ENCODE measurements at regions of chr9 and their contacts with region 1.

Region 1: DNA sequence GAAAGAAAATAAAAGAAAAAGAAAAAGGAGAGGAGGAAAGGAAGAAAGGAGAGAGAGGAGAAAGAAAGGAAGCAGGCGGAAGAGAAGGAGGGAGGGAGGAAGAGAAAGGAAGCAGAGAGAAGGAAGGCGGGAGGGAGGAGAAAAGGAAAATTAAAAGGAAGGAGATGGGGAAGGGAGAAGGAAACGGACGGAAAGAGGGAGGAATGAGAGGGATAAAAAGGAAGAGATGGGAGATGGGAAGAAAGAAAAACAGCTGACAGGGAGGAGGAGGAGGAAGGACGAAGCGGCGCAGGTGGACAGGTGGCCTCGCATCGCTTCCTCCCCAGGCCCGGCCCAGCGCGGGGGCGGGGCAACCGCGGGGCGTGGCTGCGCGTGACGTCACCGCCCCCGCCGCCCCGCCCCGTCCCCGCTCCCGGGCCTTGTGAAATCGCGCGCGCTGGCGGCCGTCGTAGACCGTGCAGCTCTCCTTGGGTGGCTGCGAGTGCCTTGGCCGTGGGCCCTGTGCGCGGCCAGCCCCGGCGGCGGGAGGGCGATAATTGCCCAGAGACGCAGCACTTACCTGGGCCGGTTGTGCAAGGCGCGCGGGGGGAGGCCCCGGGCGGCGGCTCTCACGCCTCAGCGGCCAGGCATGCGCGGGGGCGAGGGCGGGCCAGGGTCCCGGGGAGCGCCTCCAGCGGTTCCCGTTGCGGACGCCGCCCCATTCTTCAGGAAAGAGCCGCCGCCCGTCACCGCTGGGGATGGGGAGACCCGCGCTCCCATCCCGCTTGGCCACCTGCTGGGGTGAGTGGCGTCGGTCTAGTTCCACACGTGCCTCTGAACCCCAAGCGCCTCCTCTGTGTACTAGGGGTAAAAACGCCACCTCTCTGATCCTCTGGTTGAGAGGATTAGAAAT is 49.6 kb upstream of the FOXE1 start:
- DNase-seq: peak; percentile 60 to 90 (median 72)
- ATAC-seq: peak; percentile 93
- H3K4me3 ChIP-seq: peak overlapping the region; percentile 45
- H3K4me3 Mint-ChIP-seq: peak overlapping the region; percentile 84
- H3K27ac ChIP-seq: no peak overlapping the region
- H3K27ac Mint-ChIP-seq: peak overlapping the region; percentile 69
- H3K4me1 ChIP-seq: peaks cover 14% of the 10 kb centered on the region
- H3K4me1 Mint-ChIP-seq: peaks cover 5% of the 10 kb centered on the region
- H3K27me3 ChIP-seq: peaks cover 4 to 9% of the 10 kb centered on the region in 2 experiments
- H3K27me3 Mint-ChIP-seq: peaks cover 32% of the 10 kb centered on the region
- CTCF ChIP-seq: no peak

Region 2: DNA sequence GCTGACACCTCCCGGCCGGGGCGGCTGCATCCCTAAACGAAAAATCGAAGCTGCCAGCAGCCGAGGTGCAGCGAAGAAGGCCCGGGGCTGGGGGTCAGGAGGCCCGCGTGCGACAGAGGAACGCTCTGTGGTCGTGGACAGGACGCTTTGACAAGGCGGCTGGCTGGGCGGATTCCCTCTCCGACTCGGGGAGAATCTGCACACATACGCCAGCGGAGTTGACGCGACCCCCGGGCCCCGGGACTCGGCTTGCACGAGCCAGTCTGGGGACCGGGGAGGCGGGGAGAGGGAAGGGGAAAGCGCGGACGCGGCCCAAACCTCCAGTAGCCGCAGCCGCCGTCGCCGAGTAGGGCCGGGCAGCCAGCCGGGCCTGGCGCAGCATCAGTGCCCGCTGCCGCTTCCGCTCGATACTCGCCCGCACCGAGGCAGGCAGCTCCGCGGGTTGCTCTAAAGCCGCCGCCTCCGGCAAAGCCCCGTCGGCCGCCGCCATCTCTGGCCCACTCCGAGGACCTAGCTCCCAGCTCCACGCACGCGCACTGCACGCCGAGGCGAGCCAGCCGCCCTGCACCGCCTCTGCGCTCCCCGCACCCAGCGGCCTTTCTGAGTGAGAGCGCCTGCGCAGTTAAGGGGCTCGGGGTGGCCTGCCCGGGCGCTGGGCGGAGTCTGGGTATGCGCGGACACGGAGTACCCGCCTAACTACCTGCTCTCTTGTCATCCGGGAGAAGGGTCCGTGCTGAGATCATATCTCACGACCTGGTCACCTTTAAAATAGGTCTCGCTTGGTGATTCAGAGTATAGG is 106.4 kb before region 1 on chr9 and contains the start of gene XPA:
- CTCF ChIA-PET with region 1: no interaction called
- POLR2A ChIA-PET with region 1: no interaction called
- intact Hi-C with region 1: loop called (anchors 5 to 10 kb)
- DNase-seq: peak; percentile 94 to 99 (median 97)
- ATAC-seq: peak; percentile 92
- H3K4me3 ChIP-seq: peak within 1 kb of the TSS; percentile 83
- H3K4me3 Mint-ChIP-seq: peak within 1 kb of the TSS; percentile 87
- H3K27ac ChIP-seq: peak within 1 kb of the TSS; percentile 80 to 81
- H3K27ac Mint-ChIP-seq: peak within 1 kb of the TSS; percentile 86
- H3K4me1 ChIP-seq: peaks cover 26% of the 10 kb centered on the region
- H3K4me1 Mint-ChIP-seq: peaks cover 62% of the 10 kb centered on the region
- H3K27me3 ChIP-seq: no peaks in the 10 kb centered on the region
- H3K27me3 Mint-ChIP-seq: peaks cover 4% of the 10 kb centered on the region
- CTCF ChIP-seq: no peak
- total RNA-seq, gene XPA: 20.2 to 23.3 TPM

Region 3: GRCh38 chr9:97710356-97711222 is 92.8 kb before region 1 on chr9:
- CTCF ChIA-PET with region 1: no interaction called
- POLR2A ChIA-PET with region 1: no interaction called
- intact Hi-C with region 1: loop called (anchors 5 to 10 kb)
- DNase-seq: peak in 10 of 14 experiments; percentile 14 to 81 (median 29)
- ATAC-seq: peak; percentile 82
- H3K4me3 ChIP-seq: no peak overlapping the region
- H3K4me3 Mint-ChIP-seq: no peak overlapping the region
- H3K27ac ChIP-seq: no peak overlapping the region
- H3K27ac Mint-ChIP-seq: no peak overlapping the region
- H3K4me1 ChIP-seq: peaks cover 25% of the 10 kb centered on the region
- H3K4me1 Mint-ChIP-seq: peaks cover 39% of the 10 kb centered on the region
- H3K27me3 ChIP-seq: peaks cover 0 to 5% of the 10 kb centered on the region in 2 experiments
- H3K27me3 Mint-ChIP-seq: peaks cover 15% of the 10 kb centered on the region
- CTCF ChIP-seq: peak; percentile 89

Region 4: GRCh38 chr9:98034593-98035546 is 231.5 kb after region 1 on chr9:
- CTCF ChIA-PET with region 1: no interaction called
- POLR2A ChIA-PET with region 1: no interaction called
- intact Hi-C with region 1: loop called in 1 of 2 experiments (anchors 10 kb)
- DNase-seq: peak; percentile 82 to 97 (median 92)
- ATAC-seq: peak; percentile 99
- H3K4me3 ChIP-seq: no peak overlapping the region
- H3K4me3 Mint-ChIP-seq: no peak overlapping the region
- H3K27ac ChIP-seq: no peak overlapping the region
- H3K27ac Mint-ChIP-seq: no peak overlapping the region
- H3K4me1 ChIP-seq: peaks cover 6% of the 10 kb centered on the region
- H3K4me1 Mint-ChIP-seq: peaks cover 5% of the 10 kb centered on the region
- H3K27me3 ChIP-seq: no peaks in the 10 kb centered on the region
- H3K27me3 Mint-ChIP-seq: no peaks in the 10 kb centered on the region
- CTCF ChIP-seq: peak; percentile 86

Region 5: DNA sequence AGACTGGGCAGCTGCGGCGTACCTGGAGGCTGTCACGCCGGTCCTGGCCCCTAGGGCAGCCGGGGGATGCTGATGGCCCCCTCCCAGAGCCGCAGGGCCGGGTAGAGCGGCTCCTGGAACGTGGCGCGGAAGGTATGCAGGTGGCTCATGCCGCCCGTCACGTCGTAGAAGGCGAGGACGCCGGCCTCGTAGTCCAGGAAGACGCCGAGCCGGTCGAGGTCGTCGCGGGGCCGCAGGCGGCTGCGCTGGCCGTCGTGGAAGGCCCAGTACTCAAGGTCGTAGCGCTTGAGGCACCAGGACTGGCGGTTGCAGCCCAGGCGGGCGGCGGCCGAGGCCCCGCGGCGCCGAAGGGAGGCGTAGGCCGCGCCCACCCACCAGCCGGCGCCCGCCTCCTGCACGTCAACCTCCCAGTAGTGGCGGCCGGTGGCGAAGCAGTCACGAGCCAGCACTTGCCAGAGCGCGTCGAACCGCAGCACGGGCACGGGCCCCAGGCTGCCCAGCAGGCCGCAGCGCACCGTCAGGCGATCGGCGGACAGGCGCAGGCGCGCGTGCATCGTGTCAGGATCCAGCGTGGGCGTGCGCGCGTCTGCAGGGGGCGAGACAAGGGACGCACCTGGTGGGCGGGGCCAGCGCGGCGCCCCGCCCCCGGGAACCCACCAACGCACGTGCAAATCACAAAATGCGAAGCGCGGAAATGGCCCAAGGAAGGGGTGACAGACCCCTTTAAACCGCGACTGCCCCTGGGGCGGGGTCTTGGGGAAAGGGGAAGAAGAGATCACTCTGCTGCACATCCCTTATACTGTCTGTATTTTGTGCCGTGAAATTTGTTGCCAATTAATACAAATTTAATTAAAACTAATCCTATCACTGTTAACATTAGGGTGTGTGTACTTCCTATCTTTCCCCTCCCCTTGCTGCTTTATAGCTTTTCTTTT is 284.3 kb after region 1 on chr9:
- CTCF ChIA-PET with region 1: no interaction called
- POLR2A ChIA-PET with region 1: no interaction called
- intact Hi-C with region 1: no loop called
- DNase-seq: peak in 8 of 14 experiments; percentile 17 to 64 (median 40)
- ATAC-seq: peak; percentile 64
- H3K4me3 ChIP-seq: no peak overlapping the region
- H3K4me3 Mint-ChIP-seq: no peak overlapping the region
- H3K27ac ChIP-seq: no peak overlapping the region
- H3K27ac Mint-ChIP-seq: peak overlapping the region; percentile 60
- H3K4me1 ChIP-seq: peaks cover 5% of the 10 kb centered on the region
- H3K4me1 Mint-ChIP-seq: peaks cover 47% of the 10 kb centered on the region
- H3K27me3 ChIP-seq: no peaks in the 10 kb centered on the region
- H3K27me3 Mint-ChIP-seq: no peaks in the 10 kb centered on the region
- CTCF ChIP-seq: no peak

Region 6: DNA sequence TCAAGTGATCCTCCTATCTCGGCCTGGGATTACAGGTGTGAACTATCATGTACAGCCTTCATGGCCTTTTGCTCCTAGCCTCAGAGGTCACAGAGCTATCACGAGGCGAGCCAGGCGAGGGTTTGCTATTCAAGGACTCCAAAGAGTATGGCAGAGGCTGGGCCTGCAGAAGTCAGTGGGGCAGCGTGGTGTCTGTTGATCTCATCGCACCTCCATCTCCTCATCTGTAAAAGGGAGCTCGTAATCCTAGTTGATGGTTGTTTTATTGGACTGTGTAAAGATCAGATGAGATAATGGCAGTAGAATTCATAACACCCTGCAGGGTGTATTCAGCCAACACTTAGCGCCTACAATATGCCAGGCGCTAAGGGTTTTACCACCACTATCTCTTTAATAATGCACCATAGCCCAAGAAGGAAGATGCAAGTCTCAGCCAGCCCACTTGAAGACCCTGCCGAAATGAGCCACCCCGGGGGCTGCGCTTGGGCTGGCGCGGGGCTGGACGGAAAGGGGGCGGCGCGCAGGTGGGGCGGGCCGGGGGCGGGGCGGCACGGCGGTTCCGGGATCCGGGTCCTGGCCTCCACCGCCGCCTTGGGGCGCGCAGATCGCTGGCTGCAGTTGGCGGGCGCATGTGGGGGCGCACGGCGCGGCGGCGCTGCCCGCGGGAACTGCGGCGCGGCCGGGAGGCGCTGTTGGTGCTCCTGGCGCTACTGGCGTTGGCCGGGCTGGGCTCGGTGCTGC is 1003.8 kb after region 1 on chr9 and contains the start of gene GALNT12:
- CTCF ChIA-PET with region 1: no interaction called
- POLR2A ChIA-PET with region 1: no interaction called
- intact Hi-C with region 1: loop called in 1 of 2 experiments (anchors 10 kb)
- DNase-seq: peak in 13 of 14 experiments; percentile 26 to 77 (median 54)
- ATAC-seq: peak; percentile 83
- H3K4me3 ChIP-seq: peak within 1 kb of the TSS; percentile 77
- H3K4me3 Mint-ChIP-seq: peak within 1 kb of the TSS; percentile 94
- H3K27ac ChIP-seq: no peak within 1 kb of the TSS
- H3K27ac Mint-ChIP-seq: peak within 1 kb of the TSS; percentile 39
- H3K4me1 ChIP-seq: peaks cover 20% of the 10 kb centered on the region
- H3K4me1 Mint-ChIP-seq: peaks cover 27% of the 10 kb centered on the region
- H3K27me3 ChIP-seq: peaks cover 4 to 5% of the 10 kb centered on the region in 2 experiments
- H3K27me3 Mint-ChIP-seq: peaks cover 8% of the 10 kb centered on the region
- CTCF ChIP-seq: no peak
- total RNA-seq, gene GALNT12: 8.7 to 11.5 TPM